ENCODE measurements at regions of chr16 and their contacts with region 1.

Region 1: GRCh38 chr16:84726079-84726668 is 26.4 kb downstream of the USP10 start:
- H3K4me3 ChIP-seq: no peak overlapping the region
- H3K27ac ChIP-seq: no peak overlapping the region
- H3K4me1 ChIP-seq: peaks cover 27% of the 10 kb centered on the region
- CTCF ChIP-seq: peak; percentile 94

Region 2: DNA sequence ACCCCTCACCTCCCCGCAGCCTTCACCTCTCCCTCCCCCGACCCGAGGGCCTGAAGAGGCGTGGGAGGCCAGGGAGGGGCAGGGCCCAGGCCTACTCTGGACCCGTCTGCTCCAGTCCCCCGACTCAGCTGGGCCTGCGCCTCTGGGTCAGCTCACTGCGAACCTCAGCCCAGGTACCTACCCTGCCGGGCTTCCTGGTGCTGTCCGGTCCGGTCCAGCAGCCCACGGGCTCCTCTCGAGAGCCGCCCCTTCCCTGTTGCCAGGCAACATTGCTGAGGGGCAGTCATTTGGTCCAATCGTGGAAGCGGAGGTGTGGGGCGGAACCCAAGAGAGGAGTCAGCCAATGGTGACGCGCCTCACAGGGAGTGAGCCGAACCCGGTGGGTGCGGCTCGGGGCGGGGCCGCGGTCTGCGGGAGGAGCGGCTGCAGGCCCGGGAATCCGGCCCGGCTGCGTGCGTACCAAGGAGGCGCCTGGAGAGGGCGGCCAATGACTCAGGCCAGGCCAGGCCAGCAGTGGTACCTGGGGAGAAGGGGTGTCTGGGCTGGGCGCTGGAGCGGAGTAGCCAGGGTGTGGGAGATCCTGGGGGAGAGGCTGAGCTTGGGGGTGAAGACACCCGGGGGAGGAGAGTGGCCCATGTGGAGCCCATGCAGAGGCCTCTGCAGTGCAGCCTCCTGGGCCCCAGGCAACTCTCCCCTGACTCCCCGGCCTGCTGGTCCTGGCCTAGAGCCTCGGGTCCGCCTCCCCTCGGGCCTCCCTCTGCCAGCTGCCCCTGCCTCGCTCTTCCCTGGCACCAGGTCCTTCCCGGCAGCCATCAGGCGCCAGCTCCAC is 221.5 kb before region 1 on chr16 and contains the start of gene MEAK7:
- CTCF ChIA-PET with region 1: interaction called, 14 read pairs
- POLR2A ChIA-PET with region 1: no interaction called
- H3K4me3 ChIP-seq: peak within 1 kb of the TSS; percentile 87
- H3K27ac ChIP-seq: peak within 1 kb of the TSS; percentile 42; the same call in 1 of the 2 replicates
- H3K4me1 ChIP-seq: peaks cover 10% of the 10 kb centered on the region
- CTCF ChIP-seq: peak; percentile 52

Region 3: GRCh38 chr16:84617791-84618580 is 108.2 kb before region 1 on chr16 and contains the start of gene COTL1:
- CTCF ChIA-PET with region 1: interaction called, 115 read pairs
- POLR2A ChIA-PET with region 1: interaction called, 4 read pairs
- H3K4me3 ChIP-seq: peak within 1 kb of the TSS; percentile 47
- H3K27ac ChIP-seq: no peak within 1 kb of the TSS; the same call in 1 of the 2 replicates
- H3K4me1 ChIP-seq: peaks cover 4% of the 10 kb centered on the region; the same call in 1 of the 2 replicates
- CTCF ChIP-seq: no peak; the same call in 1 of the 2 replicates

Region 4: GRCh38 chr16:84699712-84700445 is 26.3 kb before region 1 on chr16 and contains the start of gene USP10:
- CTCF ChIA-PET with region 1: interaction called, 20 read pairs
- POLR2A ChIA-PET with region 1: interaction called, 4 read pairs
- H3K4me3 ChIP-seq: peak within 1 kb of the TSS; percentile 69
- H3K27ac ChIP-seq: peak within 1 kb of the TSS; percentile 91
- H3K4me1 ChIP-seq: peaks cover 13% of the 10 kb centered on the region
- CTCF ChIP-seq: no peak

Region 5: GRCh38 chr16:84738255-84739038 is 12.3 kb after region 1 on chr16:
- CTCF ChIA-PET with region 1: interaction called, 112 read pairs
- POLR2A ChIA-PET with region 1: interaction called, 3 read pairs
- H3K4me3 ChIP-seq: no peak overlapping the region
- H3K27ac ChIP-seq: no peak overlapping the region
- H3K4me1 ChIP-seq: peaks cover 10% of the 10 kb centered on the region
- CTCF ChIP-seq: peak; percentile 73

Region 6: DNA sequence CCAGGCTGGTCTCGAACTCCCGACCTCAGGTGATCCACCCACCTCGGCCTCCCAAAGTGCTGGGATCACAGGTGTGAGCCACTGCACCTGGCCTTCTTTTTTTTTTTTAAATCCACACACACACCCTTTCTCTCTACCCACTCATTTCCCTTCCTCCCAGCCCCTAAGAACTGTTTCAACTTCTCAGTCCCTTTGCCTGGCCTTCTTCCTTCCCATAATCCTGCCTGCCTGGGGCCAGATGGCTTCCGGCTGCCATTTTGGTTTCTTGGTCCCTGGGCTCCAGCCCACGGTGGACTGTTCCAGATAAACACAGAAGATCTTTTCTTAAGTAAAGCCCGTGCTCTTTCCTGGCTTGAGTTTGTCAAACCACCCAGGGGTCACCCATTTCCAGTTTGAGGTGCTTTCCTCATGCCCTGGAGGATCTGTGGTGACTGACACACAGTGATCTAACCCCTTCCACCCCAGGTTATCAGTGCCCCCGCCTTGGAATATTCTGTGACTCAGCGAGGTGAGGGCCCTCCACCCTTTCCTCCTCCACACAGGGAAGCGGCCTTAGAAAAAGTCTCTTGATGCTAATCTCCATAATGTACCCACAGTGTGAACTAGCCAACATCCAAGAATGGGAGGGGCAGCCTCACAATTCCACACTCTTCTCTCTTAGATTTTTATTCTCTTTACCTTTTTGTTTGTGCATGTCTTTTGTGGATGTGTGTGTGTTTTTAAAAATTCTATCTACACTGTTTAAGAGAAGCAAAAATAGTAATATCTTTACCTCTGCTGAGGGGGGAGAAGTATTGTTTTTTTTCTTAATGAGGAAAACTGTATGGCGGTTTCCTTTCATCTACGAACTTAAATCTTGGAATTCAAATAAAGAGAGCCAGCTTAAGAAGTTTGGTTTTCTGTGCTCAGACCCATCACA is 153.7 kb after region 1 on chr16:
- CTCF ChIA-PET with region 1: no interaction called
- POLR2A ChIA-PET with region 1: no interaction called
- H3K4me3 ChIP-seq: no peak overlapping the region
- H3K27ac ChIP-seq: no peak overlapping the region
- H3K4me1 ChIP-seq: no peaks in the 10 kb centered on the region
- CTCF ChIP-seq: no peak